CD4-positive, alpha-beta T cell (primary cell): ENCODE measurements at regions of chr11 and their contacts with region 1.

Region 1: DNA sequence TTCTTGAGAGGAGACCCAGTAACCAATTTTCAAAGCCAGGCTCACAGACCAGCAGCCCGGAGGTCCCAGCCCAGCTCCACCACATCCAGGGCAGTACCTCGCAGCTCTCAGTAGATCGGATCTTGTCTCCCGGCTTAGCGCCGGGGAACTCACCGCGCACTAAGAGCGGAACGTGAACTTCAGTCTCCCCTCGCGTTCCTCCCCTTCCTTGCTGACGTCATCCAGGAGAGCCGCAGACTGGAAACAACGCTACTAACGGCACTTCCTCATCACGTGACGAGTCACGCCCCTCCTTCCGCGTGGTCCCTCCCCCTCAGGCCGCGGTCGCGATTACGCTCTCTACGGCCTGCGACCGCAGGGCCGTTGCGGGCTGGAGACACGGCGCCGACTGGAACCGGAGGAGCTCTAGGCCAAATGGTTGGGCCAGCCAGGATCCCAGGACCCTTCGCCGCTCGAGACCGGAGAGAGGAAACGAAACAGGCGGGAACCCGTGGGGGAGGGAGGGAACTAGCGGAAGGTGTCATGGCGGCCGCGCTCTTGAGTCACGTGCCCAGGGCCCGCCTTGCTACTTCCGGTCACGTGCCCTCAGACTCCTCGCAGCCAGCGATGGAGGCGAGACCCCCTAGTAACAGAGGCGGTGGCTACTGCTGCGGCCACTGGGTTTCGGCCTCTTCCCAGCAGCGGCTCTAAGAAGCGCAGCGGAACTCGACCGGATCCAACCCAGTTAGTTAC is at the starts of genes GTF2H1 and HPS5:
- DNase-seq: peak; percentile 90 to 99 (median 93)
- ATAC-seq: peak; percentile 87
- H3K4me3 ChIP-seq: peak within 1 kb of the TSS; percentile 74
- H3K4me3 Mint-ChIP-seq: peak within 1 kb of the TSS; percentile 94
- H3K27ac ChIP-seq: peak within 1 kb of the TSS; percentile 97 to 98
- H3K27ac Mint-ChIP-seq: peak within 1 kb of the TSS; percentile 99
- H3K4me1 ChIP-seq: peaks cover 25% of the 10 kb centered on the region
- H3K4me1 Mint-ChIP-seq: peaks cover 87% of the 10 kb centered on the region
- H3K27me3 ChIP-seq: no peaks in the 10 kb centered on the region
- H3K27me3 Mint-ChIP-seq: no peaks in the 10 kb centered on the region
- CTCF ChIP-seq: no peak
- total RNA-seq, gene GTF2H1: 15.1 to 17.7 TPM
- total RNA-seq, gene HPS5: 8.8 to 9.3 TPM

Region 2: DNA sequence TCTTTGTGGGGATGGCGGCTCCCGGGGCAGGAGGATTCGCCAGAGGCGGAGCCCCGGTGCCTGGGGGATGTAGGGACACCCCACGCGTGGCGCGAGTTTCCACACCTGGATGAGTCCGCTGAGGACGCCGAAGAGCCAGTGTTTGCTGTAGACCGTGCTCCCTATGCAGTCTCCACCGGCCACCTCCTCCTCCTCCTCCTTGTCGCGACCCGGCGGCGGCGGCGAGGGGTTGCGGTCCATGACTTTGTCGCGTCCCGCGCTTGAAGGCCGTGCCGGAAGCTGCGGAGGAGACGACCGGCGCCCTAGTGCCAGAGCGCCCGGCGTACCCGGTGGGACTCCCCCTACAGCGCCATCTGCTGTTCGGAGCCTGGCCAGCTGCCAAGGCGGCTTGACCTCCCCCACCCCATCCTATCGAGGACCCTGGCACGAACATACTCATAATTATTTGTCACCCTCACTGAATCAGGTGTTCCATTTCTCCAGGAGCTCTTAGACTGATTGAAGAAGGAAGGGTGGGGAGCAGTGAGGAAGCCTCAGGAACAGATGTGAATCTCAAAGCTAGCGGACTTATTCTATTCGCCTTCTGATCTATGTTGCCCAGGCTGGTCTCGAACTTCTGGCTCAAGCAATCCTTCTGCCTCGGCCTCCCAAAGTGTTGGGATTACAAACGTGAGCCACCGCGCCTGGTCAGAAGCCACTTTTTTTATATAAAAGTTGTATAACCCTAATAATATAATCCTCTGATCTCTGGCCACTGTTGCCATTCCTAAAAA is 216.2 kb before region 1 on chr11 and contains the start of gene SAAL1:
- CTCF ChIA-PET with region 1: no interaction called
- POLR2A ChIA-PET with region 1: interaction called, 3 read pairs
- intact Hi-C with region 1: loop called in 1 of 2 experiments (anchors 5 kb)
- DNase-seq: peak; percentile 81 to 93 (median 87)
- ATAC-seq: peak; percentile 99
- H3K4me3 ChIP-seq: peak within 1 kb of the TSS; percentile 98
- H3K4me3 Mint-ChIP-seq: peak within 1 kb of the TSS; percentile 98
- H3K27ac ChIP-seq: peak within 1 kb of the TSS; percentile 32 to 43
- H3K27ac Mint-ChIP-seq: peak within 1 kb of the TSS; percentile 81
- H3K4me1 ChIP-seq: peaks cover 17% of the 10 kb centered on the region
- H3K4me1 Mint-ChIP-seq: peaks cover 53% of the 10 kb centered on the region
- H3K27me3 ChIP-seq: no peaks in the 10 kb centered on the region
- H3K27me3 Mint-ChIP-seq: peaks cover 13% of the 10 kb centered on the region
- CTCF ChIP-seq: peak; percentile 89
- total RNA-seq, gene SAAL1: 21.3 to 24.5 TPM

Region 3: GRCh38 chr11:18264035-18264434 is 58.1 kb before region 1 on chr11:
- CTCF ChIA-PET with region 1: no interaction called
- POLR2A ChIA-PET with region 1: no interaction called
- intact Hi-C with region 1: no loop called
- DNase-seq: no peak
- ATAC-seq: no peak
- H3K4me3 ChIP-seq: no peak overlapping the region
- H3K4me3 Mint-ChIP-seq: no peak overlapping the region
- H3K27ac ChIP-seq: no peak overlapping the region
- H3K27ac Mint-ChIP-seq: no peak overlapping the region
- H3K4me1 ChIP-seq: peaks cover 2% of the 10 kb centered on the region
- H3K4me1 Mint-ChIP-seq: no peaks in the 10 kb centered on the region
- H3K27me3 ChIP-seq: peaks cover 0 to 3% of the 10 kb centered on the region in 2 experiments
- H3K27me3 Mint-ChIP-seq: no peaks in the 10 kb centered on the region
- CTCF ChIP-seq: no peak

Region 4: DNA sequence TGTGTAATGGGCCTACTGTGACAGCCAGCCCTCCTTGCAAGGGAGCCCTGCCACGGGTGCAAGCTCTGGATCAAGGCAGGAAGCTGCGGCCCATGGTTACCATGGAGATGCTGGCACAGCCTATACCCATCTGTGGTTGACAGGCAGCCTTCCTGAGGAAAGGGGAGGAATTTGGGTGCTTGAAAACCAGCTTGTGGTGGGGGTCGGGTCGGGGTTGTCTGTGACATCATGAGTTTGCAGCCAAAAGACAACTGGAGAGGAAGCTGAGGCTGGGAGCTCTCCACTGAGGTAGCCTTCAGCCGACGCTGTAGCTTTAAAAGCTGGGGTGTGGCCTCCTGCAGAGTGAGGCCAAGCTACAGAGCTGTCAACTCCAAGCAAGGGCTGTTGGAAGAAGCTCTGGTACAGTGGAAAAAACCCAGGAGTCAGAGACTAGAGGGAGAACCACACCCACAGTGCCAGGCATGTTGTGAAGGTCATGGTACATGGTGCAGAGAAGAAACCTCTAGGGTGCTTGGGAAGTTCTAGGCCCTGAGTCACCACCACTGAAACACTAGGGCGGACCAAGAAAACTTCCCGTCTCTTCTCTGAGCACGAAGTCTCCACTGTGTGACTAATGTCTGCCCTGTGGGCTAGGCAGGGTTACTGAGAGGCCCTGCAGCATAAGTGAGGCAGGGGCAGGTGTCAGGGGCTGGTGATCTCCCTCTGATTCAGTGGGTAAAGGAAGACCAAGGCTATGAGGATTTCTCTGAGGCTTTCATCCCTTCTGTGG is 61.4 kb after region 1 on chr11:
- CTCF ChIA-PET with region 1: interaction called, 3 read pairs
- POLR2A ChIA-PET with region 1: interaction called, 26 read pairs
- intact Hi-C with region 1: no loop called
- DNase-seq: peak; percentile 26 to 87 (median 56)
- ATAC-seq: peak; percentile 74
- H3K4me3 ChIP-seq: peak overlapping the region; percentile 35
- H3K4me3 Mint-ChIP-seq: peak overlapping the region; percentile 73
- H3K27ac ChIP-seq: peak overlapping the region; percentile 86 to 92
- H3K27ac Mint-ChIP-seq: peak overlapping the region; percentile 96
- H3K4me1 ChIP-seq: peaks cover 53% of the 10 kb centered on the region
- H3K4me1 Mint-ChIP-seq: peaks cover 44% of the 10 kb centered on the region
- H3K27me3 ChIP-seq: no peaks in the 10 kb centered on the region
- H3K27me3 Mint-ChIP-seq: no peaks in the 10 kb centered on the region
- CTCF ChIP-seq: no peak

Region 5: DNA sequence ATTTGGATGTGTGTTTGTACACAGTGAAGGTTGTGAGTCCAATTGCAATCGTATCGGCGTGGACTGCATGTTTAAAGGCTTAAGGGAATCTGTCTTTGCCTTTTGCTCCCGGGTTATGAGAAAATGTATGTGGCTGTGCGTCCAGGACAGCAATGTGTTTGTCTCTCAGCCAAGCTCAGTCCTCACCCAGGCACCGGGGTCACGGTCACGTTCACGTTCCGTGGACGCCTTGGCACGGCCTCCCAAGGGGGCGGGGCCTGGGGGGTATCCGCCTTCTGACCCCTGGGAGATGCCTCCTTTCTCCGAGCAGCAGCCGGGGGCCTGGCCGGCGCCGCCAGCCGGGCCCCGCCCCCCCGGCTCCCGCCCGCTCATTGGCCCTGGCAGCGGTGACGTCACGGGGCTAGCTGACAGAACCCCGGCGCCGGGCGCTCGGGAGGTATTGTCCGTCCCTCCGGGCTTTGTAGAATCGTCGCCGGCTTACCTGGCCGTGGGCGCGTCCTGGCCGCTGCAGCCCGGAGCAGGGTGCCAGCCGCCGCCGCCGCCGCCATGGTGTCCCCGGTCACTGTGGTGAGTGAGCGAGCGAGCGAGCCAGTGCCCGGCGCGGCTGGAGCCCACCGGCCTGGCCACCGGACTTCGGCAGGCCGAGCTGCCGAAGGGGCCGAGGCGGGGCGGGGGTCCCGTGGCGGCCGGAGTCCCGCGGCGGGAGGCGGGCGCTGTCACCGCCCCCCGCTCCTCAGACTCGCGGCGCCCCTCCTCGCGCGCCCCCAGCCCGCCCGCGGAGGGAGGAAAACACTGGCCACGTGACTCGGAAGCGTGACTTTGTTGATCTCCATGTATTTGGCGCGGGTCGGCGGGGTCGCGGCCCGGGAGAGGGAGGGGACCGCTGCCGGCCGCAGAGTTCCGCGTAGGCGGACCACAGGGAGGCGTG is 376.5 kb after region 1 on chr11 and contains the start of gene TMEM86A:
- CTCF ChIA-PET with region 1: no interaction called
- POLR2A ChIA-PET with region 1: no interaction called
- intact Hi-C with region 1: loop called in 1 of 2 experiments (anchors 5 kb)
- DNase-seq: peak; percentile 78 to 96 (median 88)
- ATAC-seq: peak; percentile 92
- H3K4me3 ChIP-seq: peak within 1 kb of the TSS; percentile 60
- H3K4me3 Mint-ChIP-seq: peak within 1 kb of the TSS; percentile 89
- H3K27ac ChIP-seq: peak within 1 kb of the TSS; percentile 47 to 54
- H3K27ac Mint-ChIP-seq: peak within 1 kb of the TSS; percentile 70
- H3K4me1 ChIP-seq: peaks cover 26% of the 10 kb centered on the region
- H3K4me1 Mint-ChIP-seq: peaks cover 14% of the 10 kb centered on the region
- H3K27me3 ChIP-seq: no peaks in the 10 kb centered on the region
- H3K27me3 Mint-ChIP-seq: no peaks in the 10 kb centered on the region
- CTCF ChIP-seq: no peak
- total RNA-seq, gene TMEM86A: 8.0 to 8.5 TPM